MCF 10A (cell line): ENCODE measurements at regions of chr6 and their contacts with region 1.

Region 1: DNA sequence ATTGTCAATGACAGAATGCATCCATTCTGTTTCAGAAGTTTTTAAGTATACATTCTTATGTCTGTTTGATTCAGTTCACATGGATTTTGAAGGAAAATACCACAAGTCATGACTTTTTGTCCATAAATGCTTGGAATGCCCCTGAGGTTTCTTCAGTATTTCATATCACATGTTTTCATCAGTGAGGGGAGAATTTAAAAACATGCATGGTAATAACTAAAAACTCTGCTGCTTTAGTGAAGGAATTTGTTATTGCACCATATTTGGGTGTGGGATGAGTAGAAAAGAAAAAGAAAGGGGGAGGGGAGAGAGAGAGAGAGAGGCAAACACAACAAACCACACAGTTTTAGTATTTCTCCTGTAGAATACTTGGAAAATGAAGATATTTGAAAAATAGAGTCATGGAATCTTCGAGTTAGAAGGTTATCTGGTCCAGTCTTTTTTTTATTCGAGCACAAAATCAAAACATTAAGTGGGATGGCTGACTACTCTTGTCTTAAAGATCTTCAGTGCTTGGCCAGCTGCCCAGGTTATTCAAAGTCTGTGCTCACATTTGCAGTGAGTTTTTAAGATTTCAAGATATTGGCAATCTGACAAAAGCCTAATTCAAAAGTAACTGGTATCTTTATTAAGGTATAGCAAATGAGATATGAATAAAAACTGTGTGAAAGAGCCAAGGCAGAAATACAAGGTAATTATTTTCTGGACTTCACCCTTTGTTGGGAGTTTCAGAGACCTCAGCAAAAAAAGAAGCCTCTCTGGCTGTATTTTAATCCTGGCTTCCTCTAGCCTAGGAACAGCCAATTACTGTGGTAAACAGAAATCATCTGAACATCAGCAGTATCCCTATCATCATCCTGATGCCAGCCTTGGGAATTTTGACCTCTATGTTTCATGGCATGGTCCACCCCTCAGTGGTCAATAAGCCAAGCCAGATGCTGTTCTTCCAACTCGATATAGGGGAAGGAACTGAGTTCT is 687.9 kb upstream of the CITED2 start:
- DNase-seq: peak; percentile 89
- H3K4me3 Mint-ChIP-seq: peak overlapping the region; percentile 59
- H3K27ac Mint-ChIP-seq: peak overlapping the region; percentile 85
- H3K4me1 Mint-ChIP-seq: peaks cover 41% of the 10 kb centered on the region
- H3K27me3 Mint-ChIP-seq: no peaks in the 10 kb centered on the region
- CTCF ChIP-seq: no peak

Region 2: DNA sequence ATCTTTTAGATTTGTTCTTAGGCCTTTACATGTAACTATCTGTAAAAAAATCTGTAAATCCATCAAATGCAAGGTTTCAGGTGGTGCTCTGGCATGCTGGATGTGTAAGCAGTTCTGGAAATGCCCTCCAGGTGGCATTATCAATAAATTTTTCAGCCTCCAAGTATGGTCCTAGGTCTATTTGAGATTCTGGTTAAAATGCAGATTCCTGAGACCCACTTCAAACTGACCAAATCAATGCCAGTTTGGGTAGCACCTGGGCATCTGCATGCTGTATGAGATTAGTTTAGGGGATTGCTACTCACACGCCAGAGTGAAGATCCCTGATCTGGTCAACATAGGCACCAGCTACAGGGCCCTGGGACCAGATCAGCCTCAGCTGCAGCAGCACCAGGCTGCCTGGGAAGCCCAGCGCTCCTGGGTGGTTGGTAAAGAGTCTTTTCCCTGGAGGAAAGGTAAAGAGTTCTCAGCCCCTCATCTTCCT is 180.6 kb before region 1 on chr6:
- CTCF ChIA-PET with region 1: interaction called, 3 read pairs
- POLR2A ChIA-PET with region 1: interaction called, 3 read pairs
- intact Hi-C with region 1: loop called (anchors 5 kb)
- DNase-seq: peak; percentile 51
- H3K4me3 Mint-ChIP-seq: no peak overlapping the region
- H3K27ac Mint-ChIP-seq: no peak overlapping the region
- H3K4me1 Mint-ChIP-seq: peaks cover 5% of the 10 kb centered on the region
- H3K27me3 Mint-ChIP-seq: no peaks in the 10 kb centered on the region
- CTCF ChIP-seq: peak; percentile 46

Region 3: GRCh38 chr6:140857739-140858380 is 795.5 kb after region 1 on chr6:
- CTCF ChIA-PET with region 1: no interaction called
- POLR2A ChIA-PET with region 1: no interaction called
- intact Hi-C with region 1: loop called (anchors 2 kb)
- DNase-seq: peak; percentile 87
- H3K4me3 Mint-ChIP-seq: peak overlapping the region; percentile 70
- H3K27ac Mint-ChIP-seq: peak overlapping the region; percentile 72
- H3K4me1 Mint-ChIP-seq: peaks cover 38% of the 10 kb centered on the region
- H3K27me3 Mint-ChIP-seq: no peaks in the 10 kb centered on the region
- CTCF ChIP-seq: no peak